ENCODE measurements at regions of chr2 and their contacts with region 1.

Region 1: DNA sequence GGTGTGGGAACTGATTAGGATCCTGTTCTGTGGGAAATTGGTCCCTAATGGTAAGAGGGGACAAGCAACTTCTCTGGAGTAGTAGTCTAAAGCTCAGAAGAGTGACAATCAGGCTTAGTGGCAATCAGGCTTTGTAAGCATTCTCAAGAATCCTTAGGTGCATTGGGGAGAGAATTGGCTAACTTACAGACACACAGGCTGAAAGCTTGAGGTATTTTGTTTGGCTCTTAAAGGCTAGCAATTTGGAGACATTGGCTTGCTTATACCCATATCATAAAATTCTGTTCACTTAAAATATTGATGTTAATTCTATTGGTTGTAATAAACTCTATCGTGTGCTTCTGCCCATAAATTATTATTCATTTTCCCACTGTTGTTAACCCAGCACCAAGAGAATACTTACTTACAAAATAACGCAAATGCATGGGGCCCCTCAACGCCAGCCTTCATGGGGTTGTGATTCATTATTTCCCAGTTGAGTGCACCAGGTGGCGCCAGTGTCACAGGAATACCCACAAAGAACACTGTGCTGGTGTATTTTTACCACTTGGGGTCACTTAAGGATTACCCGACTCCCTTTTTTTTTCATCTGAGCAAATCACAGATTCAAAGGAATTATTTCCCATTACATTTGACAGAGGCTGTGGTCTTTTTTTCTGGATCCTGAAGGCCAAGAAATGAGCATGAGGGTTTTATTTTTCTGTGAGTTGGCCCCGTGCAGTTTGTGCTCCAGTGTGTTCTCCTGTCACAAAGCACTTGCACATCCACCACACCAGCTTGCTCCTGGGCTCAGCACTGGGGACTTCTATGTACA is 45.5 kb downstream of the DDX1 start:
- DNase-seq: peak; percentile 26 to 53 (median 46)
- ATAC-seq: peak; percentile 87
- H3K4me3 ChIP-seq: no peak overlapping the region
- H3K4me3 Mint-ChIP-seq: no peak overlapping the region
- H3K27ac ChIP-seq: no peak overlapping the region
- H3K27ac Mint-ChIP-seq: peak overlapping the region in 7 of 9 donors; percentile 15 to 88 (median 56)
- H3K4me1 ChIP-seq: no peaks in the 10 kb centered on the region
- H3K4me1 Mint-ChIP-seq: peaks cover 0 to 7% (median 4%) of the 10 kb centered on the region in 7 donors
- H3K27me3 ChIP-seq: no peaks in the 10 kb centered on the region
- H3K27me3 Mint-ChIP-seq: no peaks in the 10 kb centered on the region

Region 2: GRCh38 chr2:15614545-15615300 is 22.5 kb before region 1 on chr2:
- CTCF ChIA-PET with region 1: no interaction called
- POLR2A ChIA-PET with region 1: no interaction called
- intact Hi-C with region 1: no loop called
- DNase-seq: no peak
- ATAC-seq: no peak
- H3K4me3 ChIP-seq: no peak overlapping the region
- H3K4me3 Mint-ChIP-seq: no peak overlapping the region
- H3K27ac ChIP-seq: no peak overlapping the region
- H3K27ac Mint-ChIP-seq: peak overlapping the region in 2 of 9 donors; percentile 26 to 72
- H3K4me1 ChIP-seq: no peaks in the 10 kb centered on the region
- H3K4me1 Mint-ChIP-seq: peaks cover 0 to 15% (median 5%) of the 10 kb centered on the region in 7 donors
- H3K27me3 ChIP-seq: no peaks in the 10 kb centered on the region
- H3K27me3 Mint-ChIP-seq: no peaks in the 10 kb centered on the region

Region 3: DNA sequence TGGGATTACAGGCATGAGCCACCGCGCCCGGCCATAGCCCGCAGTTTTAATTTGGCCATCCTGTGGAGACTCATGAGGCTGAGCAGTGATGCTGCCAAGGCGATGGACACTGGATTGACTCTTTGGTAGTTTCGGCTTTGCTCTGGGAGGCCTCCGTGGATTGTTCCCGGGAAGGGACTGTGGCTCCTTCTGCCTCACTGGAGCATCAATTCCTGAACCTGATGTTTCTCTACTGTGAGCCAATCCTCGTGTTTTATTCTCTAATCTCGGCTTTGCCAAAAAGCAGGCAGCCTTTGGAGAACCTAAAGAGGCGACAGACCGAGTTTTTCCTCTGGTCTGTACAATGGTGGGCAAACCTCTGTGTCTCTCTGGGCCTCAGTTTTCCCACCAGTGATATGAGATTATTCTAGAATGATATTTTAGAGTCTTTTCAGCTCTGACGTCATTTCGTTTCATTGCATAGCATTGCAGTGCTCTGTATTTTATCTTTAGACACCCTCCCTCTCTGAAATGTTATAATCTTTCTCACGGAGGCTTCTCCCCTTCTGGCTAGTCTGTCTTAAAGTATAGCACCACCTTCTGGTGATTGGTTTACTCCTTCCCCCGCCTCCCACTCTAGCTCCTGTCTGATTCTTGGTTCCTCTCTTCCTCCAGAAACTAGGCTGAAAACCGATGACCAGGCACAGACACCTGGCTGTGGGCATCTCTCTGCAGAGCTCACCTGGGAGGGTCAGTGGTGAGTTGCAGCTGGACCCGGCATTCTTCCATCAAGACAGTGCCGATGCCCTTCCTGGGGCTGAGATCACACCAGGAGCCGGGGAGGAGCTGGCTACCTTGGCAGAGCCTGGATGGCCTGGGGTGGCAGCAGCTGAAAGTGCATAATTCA is 644.5 kb after region 1 on chr2:
- CTCF ChIA-PET with region 1: interaction called, 3 read pairs
- POLR2A ChIA-PET with region 1: no interaction called
- intact Hi-C with region 1: loop called in 1 of 2 experiments (anchors 2 kb)
- DNase-seq: peak in 4 of 9 donors; percentile 4 to 24 (median 16)
- ATAC-seq: no peak
- H3K4me3 ChIP-seq: no peak overlapping the region
- H3K4me3 Mint-ChIP-seq: no peak overlapping the region
- H3K27ac ChIP-seq: no peak overlapping the region
- H3K27ac Mint-ChIP-seq: no peak overlapping the region
- H3K4me1 ChIP-seq: no peaks in the 10 kb centered on the region
- H3K4me1 Mint-ChIP-seq: peaks cover 0 to 4% (median 0%) of the 10 kb centered on the region in 7 donors
- H3K27me3 ChIP-seq: no peaks in the 10 kb centered on the region
- H3K27me3 Mint-ChIP-seq: peaks cover 0 to 22% (median 0%) of the 10 kb centered on the region in 5 donors

Region 4: GRCh38 chr2:16496426-16497388 is 859.5 kb after region 1 on chr2:
- CTCF ChIA-PET with region 1: no interaction called
- POLR2A ChIA-PET with region 1: no interaction called
- intact Hi-C with region 1: loop called in 1 of 2 experiments (anchors 10 kb)
- DNase-seq: no peak
- ATAC-seq: no peak
- H3K4me3 ChIP-seq: no peak overlapping the region
- H3K4me3 Mint-ChIP-seq: no peak overlapping the region
- H3K27ac ChIP-seq: no peak overlapping the region
- H3K27ac Mint-ChIP-seq: no peak overlapping the region
- H3K4me1 ChIP-seq: no peaks in the 10 kb centered on the region
- H3K4me1 Mint-ChIP-seq: peaks cover 0 to 2% (median 0%) of the 10 kb centered on the region in 7 donors
- H3K27me3 ChIP-seq: no peaks in the 10 kb centered on the region
- H3K27me3 Mint-ChIP-seq: peaks cover 3 to 13% (median 10%) of the 10 kb centered on the region in 5 donors

Region 5: DNA sequence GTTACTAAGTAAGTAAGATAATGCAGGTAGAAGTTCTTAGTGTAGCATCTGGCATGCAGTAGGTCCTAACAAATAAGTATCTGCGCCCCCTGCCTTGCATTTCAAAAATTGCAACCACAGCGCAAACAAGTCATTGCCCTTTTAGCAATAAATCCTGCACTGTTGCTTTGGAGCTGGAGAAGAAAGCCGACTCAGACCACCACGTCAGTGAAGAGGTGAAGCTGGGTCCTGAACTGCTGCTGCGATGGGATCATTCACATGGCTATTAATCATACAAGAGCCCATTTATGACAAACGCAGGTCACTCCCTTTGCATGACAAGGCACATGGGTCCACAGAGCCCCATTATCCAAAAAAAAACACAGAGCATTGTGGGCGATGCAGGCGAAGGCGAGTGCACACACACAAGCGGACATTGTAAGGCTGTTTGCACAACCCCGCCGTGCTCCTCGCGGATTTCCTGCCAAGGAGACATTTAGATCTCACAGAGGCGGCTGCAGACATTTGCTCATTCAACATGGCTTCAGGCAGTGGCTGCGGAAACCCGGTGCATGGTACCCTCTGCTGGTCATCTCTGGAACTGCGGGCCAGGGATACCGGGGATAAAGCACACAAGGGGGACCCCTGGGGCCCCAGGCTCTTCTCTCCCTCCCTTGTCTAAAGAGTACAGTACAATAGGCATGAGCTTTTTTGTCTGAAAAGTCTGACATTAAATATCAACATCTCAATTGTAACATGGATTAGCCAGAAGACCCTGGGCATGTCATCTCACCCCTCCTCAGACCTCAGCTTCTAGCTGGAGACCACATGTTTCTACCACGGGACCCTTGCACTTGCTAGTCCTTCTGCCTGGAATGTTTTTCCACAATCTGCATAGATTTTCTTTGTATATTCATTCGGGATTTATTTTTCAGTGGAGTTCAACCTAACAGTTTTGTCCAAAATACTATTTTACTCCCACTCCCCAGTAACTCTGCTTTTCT is 971.8 kb after region 1 on chr2:
- CTCF ChIA-PET with region 1: interaction called, 13 read pairs
- POLR2A ChIA-PET with region 1: no interaction called
- intact Hi-C with region 1: loop called in 1 of 2 experiments (anchors 1 kb)
- DNase-seq: peak; percentile 72 to 91 (median 84)
- ATAC-seq: peak; percentile 94
- H3K4me3 ChIP-seq: peak overlapping the region; percentile 78
- H3K4me3 Mint-ChIP-seq: peak overlapping the region; percentile 79 to 97 (median 90)
- H3K27ac ChIP-seq: peak overlapping the region; percentile 36
- H3K27ac Mint-ChIP-seq: peak overlapping the region; percentile 41 to 90 (median 78)
- H3K4me1 ChIP-seq: no peaks in the 10 kb centered on the region
- H3K4me1 Mint-ChIP-seq: peaks cover 0 to 4% (median 0%) of the 10 kb centered on the region in 7 donors
- H3K27me3 ChIP-seq: no peaks in the 10 kb centered on the region
- H3K27me3 Mint-ChIP-seq: peaks cover under 1 to 6% (median under 1%) of the 10 kb centered on the region in 5 donors

Region 6: DNA sequence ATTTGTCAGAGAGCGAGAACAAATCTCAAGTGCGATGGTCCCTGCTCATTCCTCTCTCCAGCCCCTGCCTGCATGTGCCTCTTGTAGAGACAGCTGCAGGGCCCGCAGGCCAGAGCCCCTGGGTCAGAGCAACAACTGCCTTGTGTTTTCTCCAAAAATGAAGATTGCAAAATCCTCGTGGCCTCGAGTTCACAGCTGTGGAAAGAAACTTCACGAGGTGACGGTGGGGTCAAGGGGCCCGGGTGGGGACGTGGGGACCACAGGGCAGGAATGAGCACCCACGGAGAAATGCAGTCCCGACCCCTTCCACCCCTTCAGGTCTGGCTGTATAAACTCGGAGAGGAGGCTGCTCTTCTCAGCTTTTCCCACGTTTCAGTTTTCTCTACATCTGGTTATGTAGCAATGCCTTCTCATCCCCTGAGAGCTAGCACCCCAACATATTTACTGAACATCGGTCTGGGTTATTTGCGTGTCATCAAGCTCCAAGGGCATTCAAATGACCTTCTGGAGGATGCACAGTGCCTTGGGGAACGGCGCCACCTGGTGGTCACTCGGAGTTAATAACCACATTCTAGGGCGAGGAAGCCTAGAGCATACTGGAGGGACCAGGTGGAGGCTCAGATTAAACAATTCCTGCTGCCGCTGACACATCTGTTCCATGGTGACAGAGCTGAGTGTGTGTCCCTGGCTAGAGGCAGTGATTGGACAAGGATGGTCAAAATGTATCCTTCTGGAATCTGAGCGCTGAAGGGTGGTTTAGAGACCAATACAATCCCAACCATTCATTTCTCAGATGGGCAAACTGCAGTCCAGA is 1119.9 kb after region 1 on chr2:
- CTCF ChIA-PET with region 1: no interaction called
- POLR2A ChIA-PET with region 1: no interaction called
- intact Hi-C with region 1: loop called in 1 of 2 experiments (anchors 1 kb)
- DNase-seq: peak; percentile 30 to 72 (median 44)
- ATAC-seq: peak; percentile 88
- H3K4me3 ChIP-seq: no peak overlapping the region
- H3K4me3 Mint-ChIP-seq: no peak overlapping the region
- H3K27ac ChIP-seq: no peak overlapping the region
- H3K27ac Mint-ChIP-seq: no peak overlapping the region
- H3K4me1 ChIP-seq: no peaks in the 10 kb centered on the region
- H3K4me1 Mint-ChIP-seq: no peaks in the 10 kb centered on the region
- H3K27me3 ChIP-seq: no peaks in the 10 kb centered on the region
- H3K27me3 Mint-ChIP-seq: peaks cover 0 to 17% (median 7%) of the 10 kb centered on the region in 5 donors